CD8-positive, alpha-beta T cell (primary cell): ENCODE measurements at regions of chr5 and their contacts with region 1.

Region 1: GRCh38 chr5:119267958-119268386 is 87.8 kb upstream of the TNFAIP8 start:
- DNase-seq: peak; percentile 39 to 95 (median 81)
- ATAC-seq: peak; percentile 76
- H3K4me3 ChIP-seq: peak overlapping the region; percentile 93 to 96
- H3K4me3 Mint-ChIP-seq: peak overlapping the region; percentile 100
- H3K27ac ChIP-seq: peak overlapping the region; percentile 79 to 89
- H3K27ac Mint-ChIP-seq: peak overlapping the region; percentile 99
- H3K4me1 ChIP-seq: peaks cover 45% of the 10 kb centered on the region
- H3K4me1 Mint-ChIP-seq: peaks cover 75% of the 10 kb centered on the region
- H3K27me3 ChIP-seq: no peaks in the 10 kb centered on the region
- H3K27me3 Mint-ChIP-seq: no peaks in the 10 kb centered on the region
- CTCF ChIP-seq: peak; percentile 79

Region 2: GRCh38 chr5:119070828-119071572 is 197.0 kb before region 1 on chr5 and contains the start of gene DMXL1:
- CTCF ChIA-PET with region 1: interaction called, 3 read pairs
- POLR2A ChIA-PET with region 1: interaction called, 10 read pairs
- intact Hi-C with region 1: loop called (anchors 1 to 2 kb)
- DNase-seq: peak; percentile 95 to 99 (median 98)
- ATAC-seq: peak; percentile 83
- H3K4me3 ChIP-seq: peak within 1 kb of the TSS; percentile 69 to 79
- H3K4me3 Mint-ChIP-seq: peak within 1 kb of the TSS; percentile 100
- H3K27ac ChIP-seq: peak within 1 kb of the TSS; percentile 92 to 93
- H3K27ac Mint-ChIP-seq: peak within 1 kb of the TSS; percentile 100
- H3K4me1 ChIP-seq: peaks cover 25% of the 10 kb centered on the region
- H3K4me1 Mint-ChIP-seq: peaks cover 42% of the 10 kb centered on the region
- H3K27me3 ChIP-seq: no peaks in the 10 kb centered on the region
- H3K27me3 Mint-ChIP-seq: no peaks in the 10 kb centered on the region
- CTCF ChIP-seq: no peak
- total RNA-seq, gene DMXL1: 28.7 to 32.4 TPM

Region 3: DNA sequence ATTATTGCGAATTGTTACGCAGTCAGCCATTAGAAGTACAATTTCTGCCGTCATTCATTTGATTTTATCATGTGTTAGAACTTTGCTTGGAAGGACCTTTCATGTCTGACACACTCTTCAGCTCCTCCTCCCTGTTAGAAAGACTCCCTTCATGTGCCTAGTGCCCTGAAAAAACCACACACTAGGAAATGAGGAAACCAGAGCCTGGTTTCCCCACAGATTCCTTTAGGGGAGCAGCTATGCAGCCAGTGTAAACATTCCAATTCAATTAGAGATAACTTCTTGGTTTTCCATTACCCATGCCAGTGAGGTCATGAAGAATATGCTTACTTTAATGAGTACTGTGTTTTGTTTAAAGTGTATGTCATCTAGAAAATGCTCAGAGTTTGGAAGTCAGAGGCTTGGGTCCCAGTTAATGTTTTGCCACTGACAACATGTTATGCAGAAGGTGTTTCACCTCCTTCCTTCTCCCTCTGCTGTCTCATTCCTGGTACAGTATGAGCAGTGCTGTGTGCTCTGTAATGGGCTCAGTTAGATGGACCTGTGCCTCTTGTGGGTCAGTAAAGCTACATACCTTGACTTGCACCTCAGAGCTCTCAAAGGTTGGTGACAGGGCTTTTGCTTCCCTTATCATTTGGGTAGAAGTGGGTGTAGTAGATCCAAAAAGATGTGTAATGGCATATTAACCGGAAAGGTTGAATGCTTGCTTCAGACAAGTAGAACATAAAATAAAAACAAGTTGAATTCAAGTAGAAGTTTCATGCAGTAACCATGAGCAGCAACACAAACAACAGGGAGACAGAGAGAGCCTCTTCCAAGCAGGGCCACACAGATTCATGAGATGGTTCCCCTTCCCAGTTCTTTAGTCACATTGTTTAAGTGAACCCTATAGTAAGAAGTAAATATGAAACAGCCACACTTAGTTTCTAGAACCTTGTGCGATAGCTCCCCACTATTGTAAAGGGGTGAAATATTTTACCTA is 35.2 kb after region 1 on chr5:
- CTCF ChIA-PET with region 1: interaction called, 5 read pairs
- POLR2A ChIA-PET with region 1: interaction called, 8 read pairs
- intact Hi-C with region 1: loop called (anchors 1 to 2 kb)
- DNase-seq: peak in 1 of 9 experiments; percentile 56
- ATAC-seq: peak; percentile 65
- H3K4me3 ChIP-seq: no peak overlapping the region
- H3K4me3 Mint-ChIP-seq: peak overlapping the region; percentile 64
- H3K27ac ChIP-seq: peak overlapping the region; percentile 1 to 60
- H3K27ac Mint-ChIP-seq: peak overlapping the region; percentile 99
- H3K4me1 ChIP-seq: peaks cover 83% of the 10 kb centered on the region
- H3K4me1 Mint-ChIP-seq: peaks cover 94% of the 10 kb centered on the region
- H3K27me3 ChIP-seq: no peaks in the 10 kb centered on the region
- H3K27me3 Mint-ChIP-seq: no peaks in the 10 kb centered on the region
- CTCF ChIP-seq: no peak

Region 4: GRCh38 chr5:119315516-119315949 is 47.6 kb after region 1 on chr5:
- CTCF ChIA-PET with region 1: interaction called, 34 read pairs
- POLR2A ChIA-PET with region 1: interaction called, 10 read pairs
- intact Hi-C with region 1: loop called in 1 of 2 experiments (anchors 2 kb)
- DNase-seq: peak in 7 of 9 experiments; percentile 41 to 86 (median 69)
- ATAC-seq: peak; percentile 87
- H3K4me3 ChIP-seq: no peak overlapping the region
- H3K4me3 Mint-ChIP-seq: peak overlapping the region; percentile 37
- H3K27ac ChIP-seq: peak overlapping the region; percentile 25 to 62
- H3K27ac Mint-ChIP-seq: peak overlapping the region; percentile 91
- H3K4me1 ChIP-seq: peaks cover 94% of the 10 kb centered on the region
- H3K4me1 Mint-ChIP-seq: peaks cover 92% of the 10 kb centered on the region
- H3K27me3 ChIP-seq: no peaks in the 10 kb centered on the region
- H3K27me3 Mint-ChIP-seq: no peaks in the 10 kb centered on the region
- CTCF ChIP-seq: peak; percentile 74

Region 5: GRCh38 chr5:119340597-119341218 is 72.7 kb after region 1 on chr5:
- CTCF ChIA-PET with region 1: interaction called, 8 read pairs
- POLR2A ChIA-PET with region 1: interaction called, 14 read pairs
- intact Hi-C with region 1: loop called in 1 of 2 experiments (anchors 2 kb)
- DNase-seq: peak in 8 of 9 experiments; percentile 34 to 80 (median 65)
- ATAC-seq: peak; percentile 51
- H3K4me3 ChIP-seq: peak overlapping the region; percentile 18 to 41
- H3K4me3 Mint-ChIP-seq: peak overlapping the region; percentile 75
- H3K27ac ChIP-seq: peak overlapping the region; percentile 8 to 62
- H3K27ac Mint-ChIP-seq: peak overlapping the region; percentile 94
- H3K4me1 ChIP-seq: peaks cover 96% of the 10 kb centered on the region
- H3K4me1 Mint-ChIP-seq: peaks cover 94% of the 10 kb centered on the region
- H3K27me3 ChIP-seq: no peaks in the 10 kb centered on the region
- H3K27me3 Mint-ChIP-seq: no peaks in the 10 kb centered on the region
- CTCF ChIP-seq: no peak

Region 6: DNA sequence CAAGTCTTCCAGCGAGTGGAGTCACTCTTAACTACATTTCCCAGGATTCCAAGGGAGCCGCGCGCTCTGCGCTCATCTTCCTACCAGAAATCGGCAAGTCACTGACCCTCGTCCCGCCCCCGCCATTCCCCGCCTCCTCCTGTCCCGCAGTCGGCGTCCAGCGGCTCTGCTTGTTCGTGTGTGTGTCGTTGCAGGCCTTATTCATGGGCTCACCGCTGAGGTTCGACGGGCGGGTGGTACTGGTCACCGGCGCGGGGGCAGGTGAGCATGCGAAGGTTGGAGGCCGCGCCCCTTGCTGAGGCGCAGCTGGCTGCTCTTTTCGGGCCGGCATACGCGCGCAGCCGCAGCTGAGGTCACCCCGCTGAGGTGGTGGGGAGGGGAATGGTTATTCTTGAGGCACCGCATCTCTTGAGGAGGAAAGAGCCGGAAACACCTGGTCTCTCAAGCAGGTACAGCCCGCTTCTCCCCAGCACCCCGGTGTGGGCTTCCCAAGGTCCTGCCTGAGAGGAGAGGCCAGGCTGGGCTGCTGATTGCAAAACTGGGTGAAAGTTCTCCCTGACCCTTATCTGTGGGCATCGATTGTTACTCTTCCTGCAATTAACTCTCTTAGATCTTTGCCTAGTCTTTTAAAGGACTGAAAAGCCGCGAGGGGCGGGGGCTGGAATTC is 184.5 kb after region 1 on chr5 and contains the start of gene HSD17B4:
- CTCF ChIA-PET with region 1: no interaction called
- POLR2A ChIA-PET with region 1: no interaction called
- intact Hi-C with region 1: loop called in 1 of 2 experiments (anchors 1 kb)
- DNase-seq: peak; percentile 52 to 87 (median 81)
- ATAC-seq: peak; percentile 95
- H3K4me3 ChIP-seq: peak within 1 kb of the TSS; percentile 81 to 87
- H3K4me3 Mint-ChIP-seq: peak within 1 kb of the TSS; percentile 92
- H3K27ac ChIP-seq: peak within 1 kb of the TSS; percentile 66 to 73
- H3K27ac Mint-ChIP-seq: peak within 1 kb of the TSS; percentile 88
- H3K4me1 ChIP-seq: peaks cover 16% of the 10 kb centered on the region
- H3K4me1 Mint-ChIP-seq: peaks cover 21% of the 10 kb centered on the region
- H3K27me3 ChIP-seq: no peaks in the 10 kb centered on the region
- H3K27me3 Mint-ChIP-seq: no peaks in the 10 kb centered on the region
- CTCF ChIP-seq: no peak
- total RNA-seq, gene HSD17B4: 7.4 to 8.6 TPM

Region 7: DNA sequence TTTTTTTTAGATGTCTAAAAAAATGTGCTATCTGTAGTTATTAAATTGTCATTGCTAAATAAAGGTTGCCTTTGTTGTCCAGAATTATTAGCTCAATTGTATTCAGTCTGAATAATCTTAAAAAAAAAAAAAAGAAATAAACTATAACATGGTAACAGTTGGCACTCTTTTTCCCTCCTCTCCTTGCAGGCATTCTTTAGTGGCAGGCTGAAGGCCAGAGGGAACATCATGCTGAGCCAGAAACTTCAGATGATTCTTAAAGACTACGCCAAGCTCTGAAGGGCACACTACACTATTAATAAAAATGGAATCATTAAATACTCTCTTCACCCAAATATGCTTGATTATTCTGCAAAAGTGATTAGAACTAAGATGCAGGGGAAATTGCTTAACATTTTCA is 273.7 kb after region 1 on chr5:
- CTCF ChIA-PET with region 1: no interaction called
- POLR2A ChIA-PET with region 1: no interaction called
- intact Hi-C with region 1: no loop called
- DNase-seq: no peak
- ATAC-seq: no peak
- H3K4me3 ChIP-seq: no peak overlapping the region
- H3K4me3 Mint-ChIP-seq: no peak overlapping the region
- H3K27ac ChIP-seq: no peak overlapping the region
- H3K27ac Mint-ChIP-seq: no peak overlapping the region
- H3K4me1 ChIP-seq: no peaks in the 10 kb centered on the region
- H3K4me1 Mint-ChIP-seq: no peaks in the 10 kb centered on the region
- H3K27me3 ChIP-seq: no peaks in the 10 kb centered on the region
- H3K27me3 Mint-ChIP-seq: no peaks in the 10 kb centered on the region
- CTCF ChIP-seq: no peak